H1 (cell line): ENCODE measurements at regions of chr3 and their contacts with region 1.

Region 1: DNA sequence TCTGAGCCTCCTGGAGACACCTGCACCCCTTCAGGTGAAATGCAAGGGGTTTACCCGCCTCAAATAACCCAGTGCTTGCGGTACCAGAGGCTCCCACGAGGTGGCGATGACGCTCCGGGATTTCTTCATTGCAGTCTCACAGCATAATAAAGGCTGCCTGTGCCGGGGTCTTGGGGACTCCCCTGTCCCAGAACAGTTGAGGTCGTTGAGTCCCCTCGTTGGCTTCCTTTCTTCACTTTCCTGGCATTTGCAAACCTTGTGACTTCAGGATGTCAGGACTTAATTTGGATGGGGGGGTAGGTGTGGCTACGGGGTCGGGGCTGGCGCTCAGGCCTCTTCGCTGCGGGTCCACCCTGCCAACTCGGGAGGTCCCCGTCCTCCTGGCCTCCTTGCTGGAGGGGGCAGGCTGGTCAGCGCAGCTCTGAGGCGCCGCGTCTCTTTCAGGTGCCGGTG is 1.3 kb downstream of the GNAT1 start:
- DNase-seq: peak; percentile 77 to 100
- H3K4me3 ChIP-seq: no peak overlapping the region
- H3K27ac ChIP-seq: no peak overlapping the region
- H3K4me1 ChIP-seq: peaks cover 0 to 14% (median 7%) of the 10 kb centered on the region in 4 experiments; a peak in 5 of 7 replicates
- H3K27me3 ChIP-seq: peaks cover 0 to 12% (median 4%) of the 10 kb centered on the region in 4 experiments; a peak in 3 of 7 replicates
- CTCF ChIP-seq: peak in 2 of 3 experiments; percentile 92 to 98; a peak in 3 of 4 replicates
- EP300 ChIP-seq: 0 out of 3 replicates have a peak, but pooled peaks of 1 of the 2 experiments have one; percentile 33
- POLR2A ChIP-seq: no peak
- RAD21 ChIP-seq: peak; percentile 94 to 96

Region 2: GRCh38 chr3:50138266-50139200 is 54.2 kb before region 1 on chr3:
- CTCF ChIA-PET with region 1: interaction called, 68 read pairs
- POLR2A ChIA-PET with region 1: interaction called, 7 read pairs
- DNase-seq: peak in 1 of 2 experiments; percentile 71
- H3K4me3 ChIP-seq: peak overlapping the region in 3 of 4 experiments; percentile 17 to 45 (median 36); a peak in 3 of 8 replicates
- H3K27ac ChIP-seq: peak overlapping the region; percentile 41; the same call in 1 of the 2 replicates
- H3K4me1 ChIP-seq: peaks cover 4 to 32% (median 28%) of the 10 kb centered on the region in 4 experiments
- H3K27me3 ChIP-seq: no peaks in the 10 kb centered on the region; a peak in 1 of 7 replicates
- CTCF ChIP-seq: no peak
- EP300 ChIP-seq: no peak
- POLR2A ChIP-seq: no peak; a peak in 1 of 3 replicates
- RAD21 ChIP-seq: no peak

Region 3: GRCh38 chr3:50205414-50206276 is 12.9 kb after region 1 on chr3:
- CTCF ChIA-PET with region 1: interaction called, 1,138 read pairs
- POLR2A ChIA-PET with region 1: interaction called, 20 read pairs
- DNase-seq: peak in 1 of 2 experiments; percentile 89
- H3K4me3 ChIP-seq: peak overlapping the region; percentile 33 to 68 (median 58)
- H3K27ac ChIP-seq: no peak overlapping the region
- H3K4me1 ChIP-seq: peaks cover 0 to 25% (median 12%) of the 10 kb centered on the region in 4 experiments; a peak in 6 of 7 replicates
- H3K27me3 ChIP-seq: peaks cover 2 to 28% (median 21%) of the 10 kb centered on the region in 4 experiments
- CTCF ChIP-seq: no peak
- EP300 ChIP-seq: no peak
- POLR2A ChIP-seq: no peak
- RAD21 ChIP-seq: no peak

Region 4: DNA sequence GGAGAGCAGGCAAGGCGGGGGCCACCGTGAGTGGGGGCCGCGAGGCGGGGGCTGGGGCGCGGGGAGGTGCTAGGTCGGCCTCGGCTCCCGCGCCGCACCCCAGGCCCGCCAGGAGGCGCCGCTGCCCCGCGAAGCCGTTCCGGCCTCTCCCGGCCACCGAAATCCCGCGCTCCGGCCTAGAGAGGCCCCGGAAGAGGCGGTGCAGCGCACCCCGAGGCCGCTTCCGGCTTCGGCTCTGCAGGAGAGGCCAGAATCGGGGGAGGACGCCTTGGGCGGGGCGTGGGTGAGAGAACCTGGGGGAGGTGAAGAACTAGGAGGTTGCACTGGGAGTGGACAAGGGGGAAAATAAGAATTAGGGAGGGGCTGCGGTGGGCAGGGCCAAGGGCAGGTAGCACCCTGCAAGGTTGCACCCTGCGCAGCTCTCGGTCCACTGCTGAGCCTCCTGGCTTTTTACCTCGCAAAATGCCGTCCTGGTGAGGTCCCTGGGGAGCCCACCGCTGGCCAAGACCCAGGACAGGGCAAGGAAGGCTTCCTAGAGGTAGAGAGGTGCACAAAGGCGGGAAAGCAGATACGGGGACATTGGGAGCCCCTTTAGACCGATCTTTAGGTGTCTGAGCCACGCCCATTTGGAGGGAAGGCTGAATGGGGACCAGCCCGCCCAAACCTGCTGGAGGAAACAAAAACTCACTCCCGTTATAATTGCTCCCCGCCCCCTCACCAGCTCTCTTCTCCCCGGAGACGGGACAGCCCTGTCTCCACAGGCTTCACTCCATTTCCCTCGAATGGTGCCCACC is 34.9 kb after region 1 on chr3:
- CTCF ChIA-PET with region 1: interaction called, 2,149 read pairs
- POLR2A ChIA-PET with region 1: interaction called, 38 read pairs
- DNase-seq: peak; percentile 89 to 94
- H3K4me3 ChIP-seq: peak overlapping the region; percentile 51 to 88 (median 73)
- H3K27ac ChIP-seq: peak overlapping the region; percentile 86
- H3K4me1 ChIP-seq: peaks cover 0 to 18% (median 6%) of the 10 kb centered on the region in 4 experiments; a peak in 6 of 7 replicates
- H3K27me3 ChIP-seq: peaks cover 0 to 3% (median 2%) of the 10 kb centered on the region in 4 experiments; a peak in 4 of 7 replicates
- CTCF ChIP-seq: peak in 2 of 3 experiments; percentile 67 to 97; a peak in 3 of 4 replicates
- EP300 ChIP-seq: no peak; a peak in 1 of 3 replicates
- POLR2A ChIP-seq: peak in 1 of 2 experiments; percentile 53; a peak in 2 of 3 replicates
- RAD21 ChIP-seq: peak; percentile 90 to 95

Region 5: GRCh38 chr3:50260027-50260941 is 67.6 kb after region 1 on chr3:
- CTCF ChIA-PET with region 1: interaction called, 2,149 read pairs
- POLR2A ChIA-PET with region 1: interaction called, 11 read pairs
- DNase-seq: peak in 1 of 2 experiments; percentile 97
- H3K4me3 ChIP-seq: peak overlapping the region; percentile 11 to 60 (median 34)
- H3K27ac ChIP-seq: peak overlapping the region; percentile 89
- H3K4me1 ChIP-seq: peaks cover 0 to 27% (median 22%) of the 10 kb centered on the region in 4 experiments; a peak in 6 of 7 replicates
- H3K27me3 ChIP-seq: no peaks in the 10 kb centered on the region
- CTCF ChIP-seq: peak in 2 of 3 experiments; percentile 93 to 96; a peak in 3 of 4 replicates
- EP300 ChIP-seq: peak in 1 of 2 experiments; percentile 9; a peak in 1 of 3 replicates
- POLR2A ChIP-seq: peak in 1 of 2 experiments; percentile 84; a peak in 2 of 3 replicates
- RAD21 ChIP-seq: peak; percentile 79 to 90